ENCODE measurements at regions of chr15 and their contacts with region 1.

Region 1: DNA sequence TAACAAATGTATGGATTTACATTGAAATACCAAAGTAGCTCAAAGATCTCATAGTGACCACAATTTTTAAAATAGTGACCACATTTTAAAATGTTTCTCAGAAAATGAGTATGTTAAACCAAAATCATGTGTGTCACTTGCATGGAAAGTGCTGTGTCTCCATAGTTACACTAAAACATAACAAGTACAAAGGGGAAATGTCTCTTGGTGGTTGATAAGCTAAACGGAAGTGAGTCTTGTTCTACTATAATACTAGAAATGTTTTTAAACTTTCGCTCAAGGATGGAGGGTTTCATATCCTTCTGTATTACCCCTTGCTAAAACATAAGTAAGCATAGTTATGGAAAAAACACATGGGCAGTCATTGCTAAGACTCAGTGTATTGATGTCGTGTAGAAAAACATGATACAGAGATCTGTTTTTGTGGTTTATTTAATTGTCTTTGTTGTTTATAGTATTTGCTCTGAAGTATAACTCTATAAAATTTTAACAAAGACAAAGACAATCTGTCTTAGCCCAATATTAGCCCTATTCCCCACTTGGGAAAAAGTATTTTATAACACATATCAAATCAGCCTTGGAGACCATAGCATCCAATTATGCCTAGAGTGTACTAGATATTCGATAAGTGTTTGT is 27.0 kb upstream of the DENND4A start:
- DNase-seq: no peak
- H3K4me3 Mint-ChIP-seq: peak overlapping the region; percentile 31
- H3K27ac Mint-ChIP-seq: peak overlapping the region; percentile 57
- H3K4me1 Mint-ChIP-seq: peaks cover 50% of the 10 kb centered on the region
- H3K27me3 Mint-ChIP-seq: peaks cover 7% of the 10 kb centered on the region

Region 2: DNA sequence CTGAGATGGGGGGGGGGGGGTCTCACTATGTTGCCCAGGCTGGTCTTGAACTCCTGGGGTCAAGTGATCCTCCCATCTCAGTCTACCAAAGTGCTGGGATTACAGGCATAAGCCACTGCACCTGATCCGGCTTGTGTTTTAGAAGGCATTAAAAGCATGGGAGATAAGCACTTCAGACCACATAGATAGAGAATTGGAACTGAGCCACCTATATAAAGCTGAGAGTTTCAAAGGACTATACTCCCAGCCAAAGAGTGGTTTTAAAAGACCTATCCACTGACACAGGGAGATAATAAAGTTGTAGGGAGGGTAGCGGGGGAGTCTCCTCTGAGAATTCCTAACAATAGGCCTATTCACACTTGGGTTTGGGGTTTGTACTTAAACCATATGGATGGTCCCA is 61.8 kb before region 1 on chr15:
- CTCF ChIA-PET with region 1: no interaction called
- POLR2A ChIA-PET with region 1: no interaction called
- DNase-seq: no peak
- H3K4me3 Mint-ChIP-seq: no peak overlapping the region
- H3K27ac Mint-ChIP-seq: no peak overlapping the region
- H3K4me1 Mint-ChIP-seq: peaks cover 16% of the 10 kb centered on the region
- H3K27me3 Mint-ChIP-seq: no peaks in the 10 kb centered on the region

Region 3: GRCh38 chr15:65804252-65804931 is 14.7 kb before region 1 on chr15:
- CTCF ChIA-PET with region 1: interaction called, 4 read pairs
- POLR2A ChIA-PET with region 1: interaction called, 11 read pairs
- DNase-seq: no peak
- H3K4me3 Mint-ChIP-seq: no peak overlapping the region
- H3K27ac Mint-ChIP-seq: peak overlapping the region; percentile 22
- H3K4me1 Mint-ChIP-seq: peaks cover 35% of the 10 kb centered on the region
- H3K27me3 Mint-ChIP-seq: no peaks in the 10 kb centered on the region

Region 4: GRCh38 chr15:66039117-66039871 is 220.2 kb after region 1 on chr15:
- CTCF ChIA-PET with region 1: no interaction called
- POLR2A ChIA-PET with region 1: no interaction called
- DNase-seq: no peak
- H3K4me3 Mint-ChIP-seq: no peak overlapping the region
- H3K27ac Mint-ChIP-seq: no peak overlapping the region
- H3K4me1 Mint-ChIP-seq: no peaks in the 10 kb centered on the region
- H3K27me3 Mint-ChIP-seq: peaks cover 36% of the 10 kb centered on the region

Measured in activated CD4-positive, alpha-beta memory T cell treated with anti-CD3 and anti-CD28 coated beads, Interleukin-2, amount 10 ng/mL, durations not matched to agents 7 days and 5 days (primary cell).